ENCODE measurements at regions of chr7 and their contacts with region 1.

Region 1: DNA sequence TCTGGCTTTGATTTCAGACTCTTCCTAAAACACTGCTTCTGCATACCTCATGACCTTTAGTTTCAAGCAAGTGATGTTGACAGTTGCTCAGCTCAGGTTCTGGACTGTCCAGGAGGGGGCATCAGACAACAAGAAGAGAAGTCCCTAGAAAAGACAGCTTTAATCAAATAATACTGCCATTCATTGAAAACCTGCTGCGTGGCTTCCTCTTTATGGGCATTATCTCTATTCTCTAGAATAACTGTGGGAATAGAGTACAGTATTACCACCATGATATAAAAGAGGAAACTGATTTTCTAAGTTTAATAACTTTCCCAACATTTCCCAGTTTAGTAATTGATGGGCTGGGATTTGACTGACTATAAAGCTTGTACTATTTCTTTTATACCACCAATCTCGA is 170.4 kb downstream of the SNX13 start:
- DNase-seq: peak; percentile 23 to 45 (median 38)
- H3K4me3 ChIP-seq: no peak overlapping the region
- H3K4me3 Mint-ChIP-seq: no peak overlapping the region
- H3K27ac ChIP-seq: no peak overlapping the region
- H3K27ac Mint-ChIP-seq: no peak overlapping the region
- H3K4me1 ChIP-seq: no peaks in the 10 kb centered on the region
- H3K4me1 Mint-ChIP-seq: peaks cover 0 to 1% (median 0%) of the 10 kb centered on the region in 4 donors
- H3K27me3 ChIP-seq: no peaks in the 10 kb centered on the region
- H3K27me3 Mint-ChIP-seq: no peaks in the 10 kb centered on the region

Region 2: DNA sequence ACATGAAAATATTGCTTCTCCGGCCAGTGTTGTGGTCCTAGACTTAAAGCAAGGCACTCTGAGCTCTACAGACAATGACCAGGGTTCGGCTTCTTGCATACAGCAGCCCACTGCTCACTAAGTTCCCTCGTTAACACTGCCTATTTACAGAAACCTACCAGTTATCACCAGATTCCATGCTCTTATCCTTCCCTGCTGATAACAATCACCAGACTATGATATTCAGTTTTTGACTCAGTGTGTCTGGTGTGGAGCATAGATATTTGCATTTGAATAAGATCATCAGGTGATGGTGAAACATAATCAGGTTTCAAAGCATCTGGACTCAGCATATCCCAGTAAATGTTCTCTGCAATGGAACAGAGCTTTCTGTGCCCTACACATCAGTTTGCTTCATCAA is 11.9 kb before region 1 on chr7:
- CTCF ChIA-PET with region 1: interaction called, 18 read pairs
- POLR2A ChIA-PET with region 1: no interaction called
- intact Hi-C with region 1: no loop called
- DNase-seq: no peak
- H3K4me3 ChIP-seq: no peak overlapping the region
- H3K4me3 Mint-ChIP-seq: peak overlapping the region in 1 of 8 donors; percentile 6
- H3K27ac ChIP-seq: no peak overlapping the region
- H3K27ac Mint-ChIP-seq: no peak overlapping the region
- H3K4me1 ChIP-seq: no peaks in the 10 kb centered on the region
- H3K4me1 Mint-ChIP-seq: no peaks in the 10 kb centered on the region
- H3K27me3 ChIP-seq: no peaks in the 10 kb centered on the region
- H3K27me3 Mint-ChIP-seq: peaks cover 1 to 2% of the 10 kb centered on the region in 2 donors

Region 3: DNA sequence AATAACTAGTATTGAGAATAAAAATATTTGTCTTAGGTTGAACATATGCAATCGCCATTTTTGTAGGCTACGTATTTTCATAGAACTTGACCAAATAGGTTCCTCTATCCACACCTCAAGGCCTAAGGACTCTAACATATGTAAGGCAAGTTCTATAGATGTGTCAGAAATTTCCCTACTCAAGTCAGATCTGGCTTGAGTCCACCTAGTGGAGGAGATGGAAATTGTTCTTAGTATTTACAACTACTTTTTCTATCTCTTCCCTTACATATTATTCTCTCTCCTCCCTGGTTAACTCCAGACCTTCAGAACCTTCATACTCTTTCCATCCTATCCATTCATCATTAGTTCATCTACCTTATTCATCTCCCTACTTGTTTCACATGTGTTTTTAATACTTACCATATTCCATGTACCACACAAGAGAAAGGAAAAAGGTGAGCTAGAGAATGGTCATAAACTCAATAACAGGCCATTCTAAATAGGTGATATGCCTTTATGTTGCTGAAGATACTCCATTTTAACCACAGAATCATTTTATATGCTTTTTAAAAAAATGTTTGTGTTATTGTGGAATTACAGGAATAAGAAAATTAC is 551.2 kb after region 1 on chr7:
- CTCF ChIA-PET with region 1: interaction called, 17 read pairs
- POLR2A ChIA-PET with region 1: no interaction called
- intact Hi-C with region 1: no loop called
- DNase-seq: peak in 4 of 5 donors; percentile 3 to 14 (median 8)
- H3K4me3 ChIP-seq: no peak overlapping the region
- H3K4me3 Mint-ChIP-seq: no peak overlapping the region
- H3K27ac ChIP-seq: no peak overlapping the region
- H3K27ac Mint-ChIP-seq: no peak overlapping the region
- H3K4me1 ChIP-seq: no peaks in the 10 kb centered on the region
- H3K4me1 Mint-ChIP-seq: peaks cover 0 to 4% (median under 1%) of the 10 kb centered on the region in 4 donors
- H3K27me3 ChIP-seq: no peaks in the 10 kb centered on the region
- H3K27me3 Mint-ChIP-seq: peaks cover 2 to 4% of the 10 kb centered on the region in 2 donors

Region 4: DNA sequence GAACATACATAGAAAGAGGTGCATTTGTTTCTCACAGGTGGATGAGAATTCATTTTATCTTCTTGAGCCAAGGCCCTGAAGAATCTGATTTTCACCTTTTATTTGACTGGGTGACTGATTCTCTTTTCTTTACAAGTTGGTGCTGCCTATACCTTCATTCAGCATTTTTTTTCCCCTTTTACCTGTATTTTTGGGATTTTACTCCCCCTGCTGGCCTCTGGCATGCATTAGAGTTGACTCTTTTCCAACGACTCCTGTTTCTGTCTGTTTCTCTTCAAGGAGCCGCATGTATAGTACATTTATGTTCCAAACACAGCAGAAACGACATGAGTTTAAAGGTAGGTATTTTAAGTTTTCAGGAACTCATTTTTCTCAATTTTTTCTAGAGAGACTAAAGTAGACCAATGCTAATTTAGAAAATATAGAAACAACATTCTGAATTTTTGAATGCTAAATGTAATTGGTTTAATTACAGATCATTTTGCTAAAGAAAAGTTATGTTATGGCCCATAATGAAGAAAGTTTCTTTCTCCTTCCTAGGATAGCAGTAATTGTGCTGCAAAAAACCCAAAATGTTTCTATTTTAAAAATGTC is 575.8 kb after region 1 on chr7:
- CTCF ChIA-PET with region 1: interaction called, 22 read pairs
- POLR2A ChIA-PET with region 1: no interaction called
- intact Hi-C with region 1: no loop called
- DNase-seq: peak in 4 of 5 donors; percentile 22 to 41 (median 32)
- H3K4me3 ChIP-seq: no peak overlapping the region
- H3K4me3 Mint-ChIP-seq: no peak overlapping the region
- H3K27ac ChIP-seq: no peak overlapping the region
- H3K27ac Mint-ChIP-seq: no peak overlapping the region
- H3K4me1 ChIP-seq: no peaks in the 10 kb centered on the region
- H3K4me1 Mint-ChIP-seq: no peaks in the 10 kb centered on the region
- H3K27me3 ChIP-seq: no peaks in the 10 kb centered on the region
- H3K27me3 Mint-ChIP-seq: peaks cover 3 to 6% of the 10 kb centered on the region in 2 donors

Region 5: DNA sequence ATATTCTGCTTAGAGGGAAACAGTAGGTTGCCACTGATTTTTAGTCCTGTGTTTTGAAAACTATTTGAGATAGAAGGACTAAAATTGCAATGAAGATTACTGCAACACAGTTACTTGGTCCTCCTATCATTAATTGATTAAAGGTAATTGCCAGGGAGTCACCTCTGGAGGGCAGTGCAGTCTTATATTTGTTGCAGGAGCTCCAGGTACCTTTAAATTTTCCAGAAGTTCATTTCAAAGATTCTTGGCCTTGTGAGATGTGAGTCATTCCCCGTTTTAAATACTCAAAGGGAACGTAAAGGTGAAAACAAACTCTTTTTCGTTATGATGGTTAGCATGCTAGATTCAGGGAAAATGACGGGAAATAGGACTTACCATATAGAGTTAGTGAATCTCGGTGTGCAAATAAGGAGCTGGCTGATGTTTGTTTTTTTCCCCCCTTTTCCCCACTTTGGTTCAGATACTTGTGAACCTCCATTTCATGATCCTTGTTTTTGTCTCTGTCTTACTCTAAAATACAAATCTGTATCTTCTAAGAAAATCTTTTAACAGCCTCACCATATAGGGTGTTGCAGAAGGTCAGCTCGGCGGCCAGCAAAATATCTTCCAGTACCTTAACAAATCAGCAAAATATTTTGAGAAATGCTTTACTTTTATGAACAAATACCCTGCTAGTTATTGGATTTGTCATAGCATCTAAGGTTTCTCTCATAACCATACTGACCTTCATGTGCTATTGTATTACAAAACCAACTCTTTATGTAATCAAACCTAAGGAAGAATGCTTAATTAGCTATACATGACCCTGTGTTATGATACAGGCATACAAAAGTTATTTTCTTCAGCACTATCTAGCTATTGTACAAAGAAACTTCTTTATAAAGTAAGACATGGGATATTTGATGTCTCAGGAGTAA is 582.7 kb after region 1 on chr7:
- CTCF ChIA-PET with region 1: interaction called, 12 read pairs
- POLR2A ChIA-PET with region 1: no interaction called
- intact Hi-C with region 1: no loop called
- DNase-seq: no peak
- H3K4me3 ChIP-seq: no peak overlapping the region
- H3K4me3 Mint-ChIP-seq: no peak overlapping the region
- H3K27ac ChIP-seq: no peak overlapping the region
- H3K27ac Mint-ChIP-seq: no peak overlapping the region
- H3K4me1 ChIP-seq: peaks cover 5% of the 10 kb centered on the region
- H3K4me1 Mint-ChIP-seq: peaks cover 1 to 6% (median 3%) of the 10 kb centered on the region in 4 donors
- H3K27me3 ChIP-seq: no peaks in the 10 kb centered on the region
- H3K27me3 Mint-ChIP-seq: peaks cover 0 to 3% of the 10 kb centered on the region in 2 donors

Region 6: GRCh38 chr7:19665399-19666008 is 1895.6 kb after region 1 on chr7:
- CTCF ChIA-PET with region 1: interaction called, 5 read pairs
- POLR2A ChIA-PET with region 1: no interaction called
- intact Hi-C with region 1: loop called (anchors 5 kb)
- DNase-seq: peak in 3 of 5 donors; percentile 13 to 17 (median 16)
- H3K4me3 ChIP-seq: no peak overlapping the region
- H3K4me3 Mint-ChIP-seq: no peak overlapping the region
- H3K27ac ChIP-seq: no peak overlapping the region
- H3K27ac Mint-ChIP-seq: no peak overlapping the region
- H3K4me1 ChIP-seq: peaks cover 3% of the 10 kb centered on the region
- H3K4me1 Mint-ChIP-seq: peaks cover 1 to 11% (median 7%) of the 10 kb centered on the region in 4 donors
- H3K27me3 ChIP-seq: no peaks in the 10 kb centered on the region
- H3K27me3 Mint-ChIP-seq: no peaks in the 10 kb centered on the region